HCT116 (cell line): ENCODE measurements at regions of chr1 and their contacts with region 1.

Region 1: DNA sequence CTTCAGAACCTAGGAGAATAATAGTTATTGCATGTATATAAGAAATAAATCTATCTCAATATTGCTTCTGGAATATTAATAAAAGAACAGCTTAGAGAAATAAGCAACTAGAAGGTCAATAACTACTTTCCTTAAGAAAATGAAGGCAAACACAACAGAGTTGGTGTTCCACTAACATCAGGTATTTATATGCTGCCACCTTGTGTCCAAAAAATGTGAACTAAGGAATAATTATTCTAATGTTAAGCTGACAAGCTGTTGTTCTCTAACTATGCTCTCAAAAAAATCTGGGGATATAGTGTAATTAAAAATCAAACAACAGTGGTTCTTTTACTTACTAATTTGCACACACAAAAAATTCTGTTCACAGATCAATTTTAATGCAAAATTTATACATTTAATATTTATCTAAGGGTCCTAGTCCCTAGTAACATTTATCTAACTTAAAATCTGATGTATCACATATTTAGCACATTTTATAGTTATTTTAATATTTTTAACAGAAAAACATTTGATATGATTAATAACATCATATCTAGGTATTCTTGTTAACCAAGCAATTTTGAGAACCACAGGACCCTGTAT is 39.6 kb downstream of the UCHL5 start:
- DNase-seq: peak; percentile 49
- ATAC-seq: peak; percentile 78
- H3K4me3 ChIP-seq: no peak overlapping the region
- H3K27ac ChIP-seq: no peak overlapping the region
- H3K4me1 ChIP-seq: no peaks in the 10 kb centered on the region; a peak in 1 of 4 replicates
- H3K27me3 ChIP-seq: no peaks in the 10 kb centered on the region
- CTCF ChIP-seq: peak; percentile 37 to 82 (median 72); a peak in 5 of 6 replicates
- POLR2A ChIP-seq: no peak
- RAD21 ChIP-seq: peak; percentile 88

Region 2: GRCh38 chr1:192609110-192610079 is 410.1 kb before region 1 on chr1:
- CTCF ChIA-PET with region 1: interaction called, 5 read pairs
- POLR2A ChIA-PET with region 1: no interaction called
- RAD21 ChIA-PET with region 1: no interaction called
- intact Hi-C with region 1: loop called (anchors 10 kb)
- DNase-seq: no peak
- ATAC-seq: no peak
- H3K4me3 ChIP-seq: no peak overlapping the region
- H3K27ac ChIP-seq: no peak overlapping the region
- H3K4me1 ChIP-seq: peaks cover 0 to 4% of the 10 kb centered on the region in 2 experiments; a peak in 1 of 4 replicates
- H3K27me3 ChIP-seq: no peaks in the 10 kb centered on the region
- CTCF ChIP-seq: no peak
- POLR2A ChIP-seq: no peak
- RAD21 ChIP-seq: no peak

Region 3: GRCh38 chr1:192808518-192809306 is 210.8 kb before region 1 on chr1 and contains the start of gene RGS2:
- CTCF ChIA-PET with region 1: interaction called, 96 read pairs
- POLR2A ChIA-PET with region 1: interaction called, 6 read pairs
- RAD21 ChIA-PET with region 1: interaction called, 4 read pairs
- intact Hi-C with region 1: loop called (anchors 1 kb)
- DNase-seq: peak; percentile 77
- ATAC-seq: peak; percentile 96
- H3K4me3 ChIP-seq: peak within 1 kb of the TSS; percentile 91 to 93
- H3K27ac ChIP-seq: peak within 1 kb of the TSS; percentile 70
- H3K4me1 ChIP-seq: peaks cover 13 to 37% of the 10 kb centered on the region in 2 experiments; a peak in 3 of 4 replicates
- H3K27me3 ChIP-seq: no peaks in the 10 kb centered on the region
- CTCF ChIP-seq: peak in 2 of 3 experiments; percentile 18 to 37; a peak in 1 of 6 replicates
- POLR2A ChIP-seq: peak; percentile 92
- RAD21 ChIP-seq: peak; percentile 18; the same call in 1 of the 2 replicates
- total RNA-seq, gene RGS2: 21.1 TPM

Region 4: DNA sequence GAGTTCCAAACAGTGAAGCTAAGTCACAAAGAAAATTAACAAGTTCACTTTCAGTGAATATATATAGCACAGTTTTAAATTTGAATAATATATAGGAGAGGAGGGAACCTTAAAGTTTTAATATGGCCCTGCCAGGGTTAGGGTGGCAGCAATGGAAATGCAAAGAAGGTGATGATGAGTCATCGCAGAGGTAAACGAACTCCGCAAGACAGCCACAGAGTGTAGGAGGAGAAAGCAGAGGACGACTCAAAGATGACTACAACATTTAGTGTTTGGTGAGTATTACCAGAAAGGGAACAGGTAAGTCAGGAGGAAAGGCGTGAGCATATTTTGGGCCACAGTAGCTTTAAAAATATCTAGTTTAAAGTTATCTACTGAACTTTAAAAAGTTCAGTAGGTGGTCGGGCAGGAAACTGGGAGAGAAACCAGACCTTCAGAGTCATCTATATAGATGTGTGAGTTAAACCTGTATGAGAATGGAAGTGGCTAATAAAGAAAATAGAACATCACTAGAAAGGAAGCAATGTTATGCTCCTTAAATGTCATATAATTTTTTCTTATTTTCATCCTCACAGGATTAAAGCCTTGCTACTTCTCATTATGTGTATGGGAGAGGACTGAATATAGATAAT is 36.1 kb before region 1 on chr1:
- CTCF ChIA-PET with region 1: no interaction called
- POLR2A ChIA-PET with region 1: no interaction called
- RAD21 ChIA-PET with region 1: no interaction called
- intact Hi-C with region 1: no loop called
- DNase-seq: no peak
- ATAC-seq: peak; percentile 42
- H3K4me3 ChIP-seq: no peak overlapping the region
- H3K27ac ChIP-seq: peak overlapping the region; percentile 55; the same call in 1 of the 2 replicates
- H3K4me1 ChIP-seq: peaks cover 50 to 62% of the 10 kb centered on the region in 2 experiments
- H3K27me3 ChIP-seq: no peaks in the 10 kb centered on the region
- CTCF ChIP-seq: no peak
- POLR2A ChIP-seq: no peak
- RAD21 ChIP-seq: no peak

Region 5: DNA sequence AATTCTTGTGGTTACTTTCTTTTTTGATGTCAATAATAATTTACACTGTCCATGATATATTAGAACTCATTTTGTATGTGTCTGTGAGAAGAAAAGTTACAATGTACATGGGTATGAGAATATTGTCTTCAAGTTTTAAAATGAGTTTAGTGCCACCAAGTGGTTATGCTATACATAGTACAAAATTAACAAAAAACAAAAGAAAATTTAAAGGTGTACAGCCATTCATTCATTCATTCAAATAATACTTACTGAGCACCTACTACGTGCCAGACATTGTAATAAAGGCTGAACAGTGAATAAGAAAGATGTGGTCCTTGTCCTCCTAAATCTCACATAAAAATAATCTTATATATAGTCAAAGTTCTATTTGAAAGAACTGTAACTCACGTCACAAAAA is 11.9 kb after region 1 on chr1:
- CTCF ChIA-PET with region 1: interaction called, 11 read pairs
- POLR2A ChIA-PET with region 1: no interaction called
- RAD21 ChIA-PET with region 1: no interaction called
- intact Hi-C with region 1: no loop called
- DNase-seq: no peak
- ATAC-seq: peak; percentile 61
- H3K4me3 ChIP-seq: no peak overlapping the region
- H3K27ac ChIP-seq: no peak overlapping the region
- H3K4me1 ChIP-seq: no peaks in the 10 kb centered on the region
- H3K27me3 ChIP-seq: no peaks in the 10 kb centered on the region
- CTCF ChIP-seq: peak; percentile 24 to 62 (median 41); a peak in 5 of 6 replicates
- POLR2A ChIP-seq: no peak
- RAD21 ChIP-seq: peak; percentile 59

Region 6: DNA sequence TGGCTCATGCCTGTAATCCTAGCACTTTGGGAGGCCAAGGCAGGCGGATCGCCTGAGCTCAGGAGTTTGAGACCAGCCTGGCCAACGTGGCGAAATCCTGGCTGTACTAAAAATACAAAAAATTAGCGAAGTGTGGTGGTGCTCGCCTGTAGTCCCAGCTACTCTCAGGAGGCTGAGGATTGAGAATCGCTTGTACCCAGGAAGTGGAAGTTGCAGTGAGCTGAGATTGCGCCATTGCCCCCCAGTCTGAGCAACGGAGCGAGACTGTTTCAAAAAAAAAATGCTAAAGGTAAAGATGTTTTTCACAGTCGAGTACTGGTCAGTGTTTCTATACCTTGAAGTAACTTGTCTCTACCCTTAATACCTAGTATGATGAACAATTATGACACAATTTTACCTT is 74.6 kb after region 1 on chr1:
- CTCF ChIA-PET with region 1: no interaction called
- POLR2A ChIA-PET with region 1: no interaction called
- RAD21 ChIA-PET with region 1: no interaction called
- intact Hi-C with region 1: no loop called
- DNase-seq: no peak
- ATAC-seq: no peak
- H3K4me3 ChIP-seq: no peak overlapping the region
- H3K27ac ChIP-seq: no peak overlapping the region
- H3K4me1 ChIP-seq: no peaks in the 10 kb centered on the region
- H3K27me3 ChIP-seq: no peaks in the 10 kb centered on the region
- CTCF ChIP-seq: no peak
- POLR2A ChIP-seq: no peak
- RAD21 ChIP-seq: no peak

Region 7: GRCh38 chr1:193143285-193143684 is 123.8 kb after region 1 on chr1:
- CTCF ChIA-PET with region 1: interaction called, 21 read pairs
- POLR2A ChIA-PET with region 1: no interaction called
- RAD21 ChIA-PET with region 1: no interaction called
- intact Hi-C with region 1: no loop called
- DNase-seq: no peak
- ATAC-seq: 0 out of 2 replicates have a peak, but pooled peaks have one; percentile 46
- H3K4me3 ChIP-seq: no peak overlapping the region
- H3K27ac ChIP-seq: no peak overlapping the region
- H3K4me1 ChIP-seq: no peaks in the 10 kb centered on the region
- H3K27me3 ChIP-seq: no peaks in the 10 kb centered on the region
- CTCF ChIP-seq: peak; percentile 22 to 46 (median 26); a peak in 2 of 6 replicates
- POLR2A ChIP-seq: no peak
- RAD21 ChIP-seq: peak; percentile 59

Region 8: GRCh38 chr1:193183019-193183627 is 163.6 kb after region 1 on chr1:
- CTCF ChIA-PET with region 1: interaction called, 9 read pairs
- POLR2A ChIA-PET with region 1: no interaction called
- RAD21 ChIA-PET with region 1: no interaction called
- intact Hi-C with region 1: loop called (anchors 1 kb)
- DNase-seq: peak; percentile 51
- ATAC-seq: peak; percentile 72
- H3K4me3 ChIP-seq: no peak overlapping the region
- H3K27ac ChIP-seq: no peak overlapping the region
- H3K4me1 ChIP-seq: no peaks in the 10 kb centered on the region
- H3K27me3 ChIP-seq: no peaks in the 10 kb centered on the region
- CTCF ChIP-seq: peak; percentile 54 to 87 (median 78)
- POLR2A ChIP-seq: no peak
- RAD21 ChIP-seq: peak; percentile 71